Dorsolateral prefrontal cortex (tissue), 120 donors: ENCODE measurements at regions of chr1 and their contacts with region 1.

Region 1: DNA sequence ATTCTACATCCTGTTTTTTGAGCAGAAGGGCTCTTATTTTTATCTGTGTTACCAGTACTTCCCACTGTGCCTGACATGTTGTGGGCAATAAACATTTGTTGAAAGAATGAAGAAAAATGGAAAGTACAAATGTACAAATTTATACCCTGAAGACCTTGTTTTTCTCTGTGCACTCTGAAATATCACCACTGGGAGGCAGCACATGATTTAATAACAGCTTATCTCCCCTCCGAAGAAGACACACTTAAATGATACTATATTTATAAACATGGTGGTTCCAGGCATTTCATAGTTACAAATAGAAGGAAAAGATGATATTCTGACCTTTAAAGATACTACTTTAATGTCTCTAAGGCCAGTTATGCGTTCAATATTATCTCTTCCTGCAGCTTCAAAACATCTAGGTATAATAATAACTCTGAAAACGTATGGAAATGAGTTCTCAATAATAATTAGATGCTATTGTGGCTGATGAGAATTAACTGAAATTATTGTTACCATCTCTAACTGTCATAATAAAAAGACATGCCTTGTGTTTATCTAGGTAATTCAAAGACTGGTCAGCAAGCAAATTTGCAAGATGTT is 12.8 kb downstream of the DYNLT5 start:
- DNase-seq: peak in 3 of 10 donors; percentile 5 to 50 (median 5)
- H3K4me3 ChIP-seq: peak overlapping the region in 15 of 59 donors; percentile 4 to 41 (median 30)
- H3K27ac ChIP-seq: no peak overlapping the region
- H3K27me3 ChIP-seq: no peaks in the 10 kb centered on the region
- CTCF ChIP-seq: peak; percentile 58 to 91 (median 81)

Region 2: DNA sequence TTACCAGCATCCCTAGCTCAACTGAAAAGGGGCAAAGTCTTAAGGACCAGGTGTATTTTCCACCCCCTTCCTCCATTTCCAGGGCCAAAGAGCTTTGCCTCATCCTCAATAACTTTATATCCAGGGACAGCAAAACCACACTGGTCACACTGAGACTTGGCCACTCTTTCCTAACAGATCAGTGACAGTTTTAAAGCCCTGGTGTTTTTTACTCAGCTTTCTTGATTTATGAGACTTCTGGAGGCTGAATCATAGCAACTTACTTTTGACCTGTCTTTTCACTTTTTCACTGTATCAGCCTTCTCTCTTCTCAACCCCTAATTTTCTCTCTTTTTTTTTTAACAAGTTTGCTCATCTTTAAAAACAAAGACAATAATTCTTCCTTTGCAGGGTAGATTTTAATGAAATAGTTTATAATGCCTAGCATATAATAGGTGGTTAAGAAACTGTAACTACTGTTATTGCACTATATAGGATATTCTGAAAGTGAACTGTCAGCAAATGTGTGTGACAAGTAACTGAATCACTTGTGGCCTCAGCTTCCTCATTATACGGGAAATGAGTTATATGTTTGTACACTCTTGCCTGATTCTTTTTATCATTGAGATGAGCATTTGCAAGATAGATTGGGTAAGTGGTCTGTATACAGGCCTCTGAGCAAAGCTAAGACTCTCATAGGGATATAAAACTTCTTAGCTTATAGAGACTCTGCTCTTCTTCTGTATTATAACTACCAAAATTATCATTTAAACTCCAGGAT is 32.5 kb before region 1 on chr1:
- intact Hi-C with region 1: no loop called
- DNase-seq: no peak
- H3K4me3 ChIP-seq: no peak overlapping the region
- H3K27ac ChIP-seq: peak overlapping the region in 1 of 59 donors; percentile 25
- H3K27me3 ChIP-seq: no peaks in the 10 kb centered on the region
- CTCF ChIP-seq: no peak

Region 3: GRCh38 chr1:67149179-67149770 is 384.2 kb after region 1 on chr1:
- intact Hi-C with region 1: loop called (anchors 2 to 5 kb)
- DNase-seq: peak in 8 of 10 donors; percentile 13 to 62 (median 52)
- H3K4me3 ChIP-seq: peak overlapping the region in 6 of 59 donors; percentile 3 to 23 (median 9)
- H3K27ac ChIP-seq: no peak overlapping the region
- H3K27me3 ChIP-seq: peaks cover 0 to 3% (median 0%) of the 10 kb centered on the region in 45 donors
- CTCF ChIP-seq: peak; percentile 24 to 97 (median 81)

Region 4: GRCh38 chr1:67214420-67215174 is 449.5 kb after region 1 on chr1:
- intact Hi-C with region 1: loop called in 1 of 2 experiments (anchors 5 kb)
- DNase-seq: peak in 1 of 10 donors; percentile 44
- H3K4me3 ChIP-seq: no peak overlapping the region
- H3K27ac ChIP-seq: no peak overlapping the region
- H3K27me3 ChIP-seq: peaks cover 0 to under 1% (median 0%) of the 10 kb centered on the region in 45 donors
- CTCF ChIP-seq: peak in 54 of 56 donors; percentile 18 to 65 (median 46)